GM12878 (cell line): ENCODE measurements at regions of chr17 and their contacts with region 1.

Region 1: GRCh38 chr17:46121841-46122485 is 71.3 kb downstream of the KANSL1 start:
- DNase-seq: peak; percentile 65
- ATAC-seq: peak; percentile 81
- H3K4me3 ChIP-seq: peak overlapping the region; percentile 33
- H3K27ac ChIP-seq: peak overlapping the region; percentile 62
- H3K4me1 ChIP-seq: peaks cover 59% of the 10 kb centered on the region
- H3K27me3 ChIP-seq: no peaks in the 10 kb centered on the region
- CTCF ChIP-seq: no peak
- EP300 ChIP-seq: peak; percentile 33 to 59; a peak in 3 of 4 replicates
- POLR2A ChIP-seq: no peak
- RAD21 ChIP-seq: no peak

Region 2: GRCh38 chr17:46063240-46063639 is 58.7 kb before region 1 on chr17:
- CTCF ChIA-PET with region 1: no interaction called
- POLR2A ChIA-PET with region 1: no interaction called
- RAD21 ChIA-PET with region 1: no interaction called
- SMC1A ChIA-PET with region 1: no interaction called
- in situ Hi-C with region 1: no loop called
- intact Hi-C with region 1: no loop called
- DNase-seq: no peak
- ATAC-seq: no peak
- H3K4me3 ChIP-seq: no peak overlapping the region
- H3K27ac ChIP-seq: no peak overlapping the region
- H3K4me1 ChIP-seq: no peaks in the 10 kb centered on the region
- H3K27me3 ChIP-seq: no peaks in the 10 kb centered on the region
- CTCF ChIP-seq: no peak
- EP300 ChIP-seq: no peak
- POLR2A ChIP-seq: no peak
- RAD21 ChIP-seq: no peak

Region 3: DNA sequence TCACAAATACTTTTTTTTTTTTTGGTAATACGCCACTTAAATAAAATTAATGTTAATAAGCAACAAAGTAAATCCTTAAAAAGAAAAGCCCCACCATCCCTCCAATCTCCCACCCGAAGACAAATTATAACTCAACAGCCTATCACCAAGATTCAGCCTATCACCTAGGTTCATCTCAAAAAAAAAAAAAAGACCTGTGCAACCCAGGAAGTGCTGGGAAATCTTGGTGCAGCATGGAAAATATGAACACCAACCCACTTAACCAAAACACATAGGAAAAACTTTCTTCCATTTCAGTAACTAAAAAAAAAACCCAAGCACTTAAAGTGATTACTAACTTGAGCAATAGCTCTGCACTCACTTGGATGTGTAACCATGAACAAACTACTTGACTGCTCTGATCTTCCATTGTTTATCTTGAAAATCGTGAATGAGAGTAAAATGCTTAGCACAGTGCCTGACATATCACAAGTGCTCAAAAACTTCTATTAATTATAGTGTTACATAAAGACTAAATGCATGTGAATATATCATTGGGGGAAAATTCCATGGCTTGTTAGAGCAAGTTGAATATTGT is 32.5 kb before region 1 on chr17:
- CTCF ChIA-PET with region 1: interaction called, 6 read pairs
- POLR2A ChIA-PET with region 1: interaction called, 7 read pairs
- RAD21 ChIA-PET with region 1: interaction called, 3 read pairs
- SMC1A ChIA-PET with region 1: interaction called, 25 read pairs
- in situ Hi-C with region 1: no loop called
- intact Hi-C with region 1: no loop called
- DNase-seq: no peak
- ATAC-seq: no peak
- H3K4me3 ChIP-seq: no peak overlapping the region
- H3K27ac ChIP-seq: no peak overlapping the region
- H3K4me1 ChIP-seq: no peaks in the 10 kb centered on the region
- H3K27me3 ChIP-seq: no peaks in the 10 kb centered on the region
- CTCF ChIP-seq: no peak
- EP300 ChIP-seq: no peak
- POLR2A ChIP-seq: no peak
- RAD21 ChIP-seq: no peak

Region 4: DNA sequence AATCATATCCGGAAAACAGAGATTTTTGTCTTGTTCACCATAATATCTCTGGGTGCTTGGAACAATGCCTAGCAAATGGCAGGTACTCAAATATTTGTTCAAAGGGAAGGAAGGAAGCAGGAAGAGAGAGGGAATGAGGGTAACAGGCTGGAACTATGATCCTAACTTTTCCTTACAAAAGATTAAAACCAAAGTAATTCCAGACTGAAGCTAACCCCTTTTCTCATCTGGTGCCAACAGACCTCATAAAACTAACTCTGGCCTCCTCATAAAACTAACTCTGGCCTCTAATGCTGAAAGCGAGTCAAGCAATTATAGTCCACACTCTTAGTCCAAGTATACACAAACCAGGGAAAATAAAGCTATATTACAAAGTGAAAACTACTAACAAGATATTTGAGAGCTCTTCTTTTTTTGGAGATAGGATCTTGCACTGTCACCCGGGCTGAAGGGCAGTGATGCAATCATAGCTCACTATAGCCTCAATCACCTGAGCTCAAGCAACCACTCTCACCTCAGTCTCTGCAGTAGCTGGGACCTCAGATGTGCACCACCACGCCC is 13.3 kb before region 1 on chr17:
- CTCF ChIA-PET with region 1: interaction called, 13 read pairs
- POLR2A ChIA-PET with region 1: interaction called, 7 read pairs
- RAD21 ChIA-PET with region 1: interaction called, 3 read pairs
- SMC1A ChIA-PET with region 1: interaction called, 88 read pairs
- in situ Hi-C with region 1: no loop called
- intact Hi-C with region 1: no loop called
- DNase-seq: no peak
- ATAC-seq: no peak; the same call in 2 of the 3 replicates
- H3K4me3 ChIP-seq: no peak overlapping the region
- H3K27ac ChIP-seq: no peak overlapping the region
- H3K4me1 ChIP-seq: peaks cover 3% of the 10 kb centered on the region; the same call in 1 of the 2 replicates
- H3K27me3 ChIP-seq: no peaks in the 10 kb centered on the region
- CTCF ChIP-seq: no peak
- EP300 ChIP-seq: no peak
- POLR2A ChIP-seq: no peak
- RAD21 ChIP-seq: no peak

Region 5: GRCh38 chr17:46154151-46154816 is 32.3 kb after region 1 on chr17:
- CTCF ChIA-PET with region 1: interaction called, 14 read pairs
- POLR2A ChIA-PET with region 1: interaction called, 7 read pairs
- RAD21 ChIA-PET with region 1: interaction called, 12 read pairs
- SMC1A ChIA-PET with region 1: interaction called, 113 read pairs
- in situ Hi-C with region 1: no loop called
- intact Hi-C with region 1: no loop called
- DNase-seq: no peak
- ATAC-seq: no peak
- H3K4me3 ChIP-seq: no peak overlapping the region
- H3K27ac ChIP-seq: peak overlapping the region; percentile 29
- H3K4me1 ChIP-seq: peaks cover 90% of the 10 kb centered on the region
- H3K27me3 ChIP-seq: no peaks in the 10 kb centered on the region
- CTCF ChIP-seq: no peak
- EP300 ChIP-seq: no peak
- POLR2A ChIP-seq: no peak
- RAD21 ChIP-seq: no peak

Region 6: GRCh38 chr17:46159686-46160085 is 37.7 kb after region 1 on chr17:
- CTCF ChIA-PET with region 1: interaction called, 9 read pairs
- POLR2A ChIA-PET with region 1: interaction called, 7 read pairs
- RAD21 ChIA-PET with region 1: interaction called, 12 read pairs
- SMC1A ChIA-PET with region 1: interaction called, 113 read pairs
- in situ Hi-C with region 1: no loop called
- intact Hi-C with region 1: no loop called
- DNase-seq: no peak
- ATAC-seq: no peak
- H3K4me3 ChIP-seq: no peak overlapping the region
- H3K27ac ChIP-seq: no peak overlapping the region
- H3K4me1 ChIP-seq: peaks cover 59% of the 10 kb centered on the region
- H3K27me3 ChIP-seq: no peaks in the 10 kb centered on the region
- CTCF ChIP-seq: no peak
- EP300 ChIP-seq: no peak
- POLR2A ChIP-seq: no peak
- RAD21 ChIP-seq: no peak

Region 7: DNA sequence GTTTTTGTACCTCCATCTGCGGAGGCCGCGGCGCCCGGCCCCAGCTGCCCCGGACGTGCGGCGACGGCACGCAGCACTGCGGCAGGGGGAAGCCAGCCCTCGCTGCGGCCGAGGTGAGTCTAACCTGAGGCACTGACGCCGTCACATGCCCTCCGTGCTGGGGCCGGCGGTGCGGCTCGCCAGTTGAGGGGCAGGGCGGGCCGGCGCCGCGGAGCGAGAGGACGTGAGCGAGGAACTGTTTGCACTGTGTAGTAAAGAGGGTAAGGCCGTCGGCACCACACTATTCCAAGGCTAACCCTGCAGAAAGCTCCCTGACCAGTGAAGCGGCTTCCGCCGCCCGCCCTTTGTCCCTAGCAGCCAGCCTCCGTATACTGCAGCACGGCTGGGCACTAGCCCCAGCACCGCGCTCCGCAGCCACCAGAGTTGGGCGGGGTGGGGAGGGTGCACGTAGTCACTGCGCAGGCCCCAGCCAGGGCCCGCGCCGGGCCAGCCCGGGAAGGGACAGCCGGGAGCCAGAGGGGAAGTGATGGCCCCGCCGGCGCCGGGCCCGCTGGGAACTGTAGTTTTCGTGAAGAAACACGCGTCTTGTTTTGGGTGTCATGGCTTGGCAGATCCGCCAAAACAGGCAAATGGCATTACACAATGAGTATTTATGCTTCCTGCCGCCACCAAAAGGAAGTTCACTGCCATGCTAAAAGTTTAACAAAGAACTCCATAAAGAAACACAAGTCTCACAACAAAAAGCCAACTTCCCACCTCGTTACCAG is 71.8 kb after region 1 on chr17:
- CTCF ChIA-PET with region 1: interaction called, 13 read pairs
- POLR2A ChIA-PET with region 1: interaction called, 5 read pairs
- RAD21 ChIA-PET with region 1: interaction called, 5 read pairs
- SMC1A ChIA-PET with region 1: interaction called, 93 read pairs
- in situ Hi-C with region 1: no loop called
- intact Hi-C with region 1: loop called (anchors 2 kb)
- DNase-seq: peak; percentile 88
- ATAC-seq: peak; percentile 90
- H3K4me3 ChIP-seq: peak overlapping the region; percentile 87
- H3K27ac ChIP-seq: peak overlapping the region; percentile 98
- H3K4me1 ChIP-seq: peaks cover 32% of the 10 kb centered on the region
- H3K27me3 ChIP-seq: no peaks in the 10 kb centered on the region
- CTCF ChIP-seq: peak in 2 of 3 experiments; percentile 13 to 26; a peak in 3 of 6 replicates
- EP300 ChIP-seq: peak in 1 of 2 experiments; percentile 7; a peak in 1 of 4 replicates
- POLR2A ChIP-seq: peak; percentile 85
- RAD21 ChIP-seq: no peak